MCF 10A (cell line): ENCODE measurements at regions of chr2 and their contacts with region 1.

Region 1: GRCh38 chr2:160109936-160110673 is 47.7 kb upstream of the PLA2R1 start:
- DNase-seq: peak; percentile 82
- H3K4me3 Mint-ChIP-seq: no peak overlapping the region
- H3K27ac Mint-ChIP-seq: peak overlapping the region; percentile 82
- H3K4me1 Mint-ChIP-seq: peaks cover 17% of the 10 kb centered on the region
- H3K27me3 Mint-ChIP-seq: no peaks in the 10 kb centered on the region
- CTCF ChIP-seq: peak; percentile 80

Region 2: GRCh38 chr2:160087854-160088745 is 22.0 kb before region 1 on chr2:
- CTCF ChIA-PET with region 1: interaction called, 22 read pairs
- POLR2A ChIA-PET with region 1: interaction called, 19 read pairs
- intact Hi-C with region 1: no loop called
- DNase-seq: peak; percentile 64
- H3K4me3 Mint-ChIP-seq: no peak overlapping the region
- H3K27ac Mint-ChIP-seq: no peak overlapping the region
- H3K4me1 Mint-ChIP-seq: peaks cover 13% of the 10 kb centered on the region
- H3K27me3 Mint-ChIP-seq: no peaks in the 10 kb centered on the region
- CTCF ChIP-seq: peak; percentile 24

Region 3: DNA sequence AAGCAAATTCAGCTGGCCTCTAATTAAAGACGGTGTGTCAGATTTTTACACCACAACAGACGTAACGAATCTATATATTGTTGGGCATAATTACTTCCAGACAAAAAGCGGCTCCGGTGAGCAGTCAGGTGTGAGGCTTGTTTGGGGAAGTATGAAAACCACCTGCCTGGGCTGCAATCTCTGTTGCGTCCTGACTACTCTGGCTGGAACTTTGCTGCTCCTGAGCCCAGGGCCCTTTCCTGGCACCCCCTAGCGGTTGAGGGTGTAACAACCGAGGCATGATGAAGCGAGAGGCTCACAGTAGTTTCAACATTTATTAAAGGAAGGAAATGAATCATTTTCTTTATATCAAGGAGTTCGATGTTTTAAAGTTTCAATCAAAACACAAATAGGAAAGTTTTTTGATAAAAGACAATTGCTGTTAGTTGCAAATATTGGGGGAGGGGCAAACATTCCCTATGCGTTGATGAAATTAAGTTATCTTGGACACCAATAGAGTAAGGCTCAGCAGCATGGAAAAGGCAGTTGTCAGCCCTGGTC is 100.6 kb after region 1 on chr2:
- CTCF ChIA-PET with region 1: interaction called, 21 read pairs
- POLR2A ChIA-PET with region 1: interaction called, 10 read pairs
- intact Hi-C with region 1: loop called (anchors 1 kb)
- DNase-seq: peak; percentile 90
- H3K4me3 Mint-ChIP-seq: no peak overlapping the region
- H3K27ac Mint-ChIP-seq: peak overlapping the region; percentile 73
- H3K4me1 Mint-ChIP-seq: peaks cover 55% of the 10 kb centered on the region
- H3K27me3 Mint-ChIP-seq: no peaks in the 10 kb centered on the region
- CTCF ChIP-seq: peak; percentile 68

Region 4: DNA sequence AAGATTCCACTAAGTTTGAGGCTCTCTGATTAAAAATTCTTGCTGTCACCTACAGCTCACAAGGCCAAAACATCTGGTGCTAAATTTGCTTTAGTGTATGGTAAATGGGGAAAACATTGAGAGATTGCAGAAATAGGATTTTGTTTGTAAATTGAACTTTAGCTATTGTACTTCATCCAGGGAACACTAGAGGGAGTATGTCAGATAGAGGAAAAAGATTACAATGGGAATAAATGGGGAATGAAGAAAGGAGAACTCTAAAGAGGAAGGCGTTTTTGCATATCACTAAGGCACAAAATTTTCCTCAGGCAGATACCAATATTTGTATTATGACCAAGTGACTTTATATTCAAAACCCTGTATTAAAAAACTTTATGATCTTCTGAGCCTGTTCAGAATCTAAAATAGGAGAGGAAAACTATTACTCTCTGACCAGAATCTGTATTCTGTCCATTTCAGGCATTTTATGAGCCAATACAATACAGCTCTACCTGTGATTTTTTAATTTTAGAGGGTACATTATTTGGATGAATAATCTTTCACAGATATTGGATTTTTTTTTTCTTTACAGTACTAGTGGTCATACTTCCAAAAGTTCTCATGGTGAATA is 142.3 kb after region 1 on chr2:
- CTCF ChIA-PET with region 1: interaction called, 3 read pairs
- POLR2A ChIA-PET with region 1: interaction called, 6 read pairs
- intact Hi-C with region 1: loop called (anchors 2 kb)
- DNase-seq: peak; percentile 49
- H3K4me3 Mint-ChIP-seq: no peak overlapping the region
- H3K27ac Mint-ChIP-seq: no peak overlapping the region
- H3K4me1 Mint-ChIP-seq: peaks cover 23% of the 10 kb centered on the region
- H3K27me3 Mint-ChIP-seq: no peaks in the 10 kb centered on the region
- CTCF ChIP-seq: peak; percentile 54

Region 5: DNA sequence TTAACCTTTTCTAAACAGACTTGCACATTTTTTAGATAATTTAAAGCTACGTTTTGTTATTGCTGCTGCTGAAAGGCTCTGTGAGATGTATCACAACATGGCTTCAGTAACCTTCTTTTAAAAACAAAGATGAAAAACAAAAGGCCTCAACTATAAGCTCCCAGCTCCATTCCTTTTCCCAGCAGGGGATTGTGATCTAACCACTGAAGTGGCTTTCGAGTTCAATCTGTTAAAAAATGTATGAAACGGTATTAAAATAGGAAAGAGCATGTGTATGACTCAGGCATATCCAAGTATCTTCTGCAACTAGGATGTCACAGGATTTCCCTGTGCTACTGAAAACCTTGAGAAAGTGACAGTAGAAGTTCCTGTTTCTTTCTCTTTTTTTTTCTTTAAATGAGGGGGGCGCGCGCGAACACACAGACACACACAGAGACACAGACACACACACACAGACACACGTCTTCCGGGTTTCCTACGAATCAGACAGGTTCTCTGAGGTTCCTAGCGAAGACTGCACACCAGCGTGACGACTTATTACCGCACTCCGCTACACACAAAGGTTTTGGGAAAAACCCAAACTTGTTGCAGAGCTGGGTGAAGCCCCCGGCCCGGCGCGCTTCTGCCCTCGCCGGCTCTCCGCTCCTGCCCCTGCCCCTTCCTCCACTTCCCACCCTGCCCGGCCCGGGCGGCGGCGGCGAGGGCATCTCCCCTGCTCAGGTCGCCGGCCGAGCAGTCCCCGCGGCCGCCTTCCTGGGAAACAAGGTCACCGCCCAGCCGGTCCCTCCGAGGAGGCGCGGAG is 296.7 kb after region 1 on chr2:
- CTCF ChIA-PET with region 1: interaction called, 5 read pairs
- POLR2A ChIA-PET with region 1: interaction called, 7 read pairs
- intact Hi-C with region 1: loop called (anchors 10 kb)
- DNase-seq: peak; percentile 73
- H3K4me3 Mint-ChIP-seq: peak overlapping the region; percentile 92
- H3K27ac Mint-ChIP-seq: peak overlapping the region; percentile 85
- H3K4me1 Mint-ChIP-seq: peaks cover 39% of the 10 kb centered on the region
- H3K27me3 Mint-ChIP-seq: no peaks in the 10 kb centered on the region
- CTCF ChIP-seq: no peak